Sigmoid colon (tissue), 7 donors: ENCODE measurements at regions of chr11 and their contacts with region 1.

Region 1: GRCh38 chr11:114348200-114349191 is 51.8 kb downstream of the C11orf71 start:
- DNase-seq: no peak
- H3K4me3 ChIP-seq: no peak overlapping the region
- H3K27ac ChIP-seq: no peak overlapping the region
- H3K4me1 ChIP-seq: no peaks in the 10 kb centered on the region
- H3K27me3 ChIP-seq: no peaks in the 10 kb centered on the region
- CTCF ChIP-seq: peak; percentile 13 to 64 (median 34)
- EP300 ChIP-seq: no peak
- POLR2A ChIP-seq: no peak

Region 2: DNA sequence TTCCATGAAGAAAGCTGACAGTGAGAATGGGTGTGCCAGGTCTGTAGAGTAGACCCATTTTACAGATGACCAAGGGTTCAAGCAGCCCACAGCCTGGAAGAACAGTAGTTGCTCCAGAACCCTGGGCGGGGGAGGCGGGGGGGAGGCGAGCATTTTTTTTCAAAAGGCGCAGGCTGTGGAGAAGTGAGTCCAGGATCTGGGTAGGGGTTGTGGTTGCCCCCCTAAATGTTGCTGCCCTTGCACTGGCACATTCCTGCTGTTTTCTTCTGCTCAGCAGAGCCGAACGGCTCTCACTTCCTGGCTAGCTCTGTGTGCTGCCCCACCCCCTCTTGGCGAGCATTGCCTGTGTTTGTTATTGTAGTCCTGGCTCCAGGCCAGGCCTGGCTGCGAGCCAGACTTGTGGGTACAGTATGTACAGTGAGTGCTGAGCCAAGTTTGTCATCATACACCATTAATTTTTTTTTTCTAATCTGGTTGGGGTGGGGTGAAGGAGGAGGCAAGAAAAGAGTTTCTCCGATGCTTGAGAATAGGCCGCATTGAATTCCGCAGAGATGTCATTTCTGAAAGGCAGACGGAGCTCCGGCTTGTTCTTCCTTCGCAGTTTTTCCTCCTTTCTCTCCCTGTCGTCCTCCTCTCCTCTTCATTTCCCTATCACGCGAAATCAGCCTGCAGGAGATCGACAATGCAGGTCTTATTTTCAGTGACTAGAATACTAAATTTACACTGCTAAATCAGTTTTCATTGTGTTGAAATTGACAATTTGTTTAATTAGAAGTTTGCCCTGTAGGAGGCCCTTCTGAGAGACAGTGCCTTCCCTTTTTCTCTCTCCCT is 188.5 kb before region 1 on chr11:
- intact Hi-C with region 1: no loop called
- DNase-seq: peak; percentile 100
- H3K4me3 ChIP-seq: peak overlapping the region; percentile 14 to 30 (median 24)
- H3K27ac ChIP-seq: peak overlapping the region; percentile 94 to 99 (median 97)
- H3K4me1 ChIP-seq: peaks cover 0 to 93% (median 92%) of the 10 kb centered on the region in 4 donors
- H3K27me3 ChIP-seq: no peaks in the 10 kb centered on the region
- CTCF ChIP-seq: no peak
- EP300 ChIP-seq: peak; percentile 100
- POLR2A ChIP-seq: peak; percentile 64 to 73

Region 3: DNA sequence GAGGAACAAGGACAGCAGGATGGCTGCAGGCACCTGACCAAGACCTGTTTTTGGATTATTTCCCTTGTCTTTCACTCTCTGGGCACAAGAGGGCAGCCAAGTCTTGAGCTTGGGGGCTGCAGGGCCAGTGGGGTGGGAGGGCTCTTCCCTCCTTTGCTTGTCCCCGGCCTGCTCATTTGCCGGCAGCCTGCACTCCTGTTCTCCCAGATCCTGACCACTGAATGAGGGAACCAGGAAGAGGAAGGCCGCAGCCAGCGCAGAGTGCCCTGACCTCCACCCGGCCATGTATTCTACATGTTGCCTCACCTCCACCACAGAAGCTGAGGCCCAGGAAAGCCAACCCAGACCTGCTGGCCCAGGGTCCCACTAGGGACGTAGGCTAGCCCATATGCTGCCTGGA is 67.8 kb before region 1 on chr11:
- intact Hi-C with region 1: loop called (anchors 5 kb)
- DNase-seq: peak; percentile 82
- H3K4me3 ChIP-seq: no peak overlapping the region
- H3K27ac ChIP-seq: peak overlapping the region in 3 of 4 donors; percentile 28 to 47 (median 36)
- H3K4me1 ChIP-seq: peaks cover 0 to 22% (median 20%) of the 10 kb centered on the region in 4 donors
- H3K27me3 ChIP-seq: no peaks in the 10 kb centered on the region
- CTCF ChIP-seq: peak; percentile 31 to 57 (median 48)
- EP300 ChIP-seq: no peak
- POLR2A ChIP-seq: no peak

Region 4: GRCh38 chr11:114416441-114416961 is 68.0 kb after region 1 on chr11:
- intact Hi-C with region 1: no loop called
- DNase-seq: no peak
- H3K4me3 ChIP-seq: no peak overlapping the region
- H3K27ac ChIP-seq: no peak overlapping the region
- H3K4me1 ChIP-seq: no peaks in the 10 kb centered on the region
- H3K27me3 ChIP-seq: no peaks in the 10 kb centered on the region
- CTCF ChIP-seq: no peak
- EP300 ChIP-seq: no peak
- POLR2A ChIP-seq: no peak